ENCODE measurements at regions of chr2 and their contacts with region 1.

Region 1: DNA sequence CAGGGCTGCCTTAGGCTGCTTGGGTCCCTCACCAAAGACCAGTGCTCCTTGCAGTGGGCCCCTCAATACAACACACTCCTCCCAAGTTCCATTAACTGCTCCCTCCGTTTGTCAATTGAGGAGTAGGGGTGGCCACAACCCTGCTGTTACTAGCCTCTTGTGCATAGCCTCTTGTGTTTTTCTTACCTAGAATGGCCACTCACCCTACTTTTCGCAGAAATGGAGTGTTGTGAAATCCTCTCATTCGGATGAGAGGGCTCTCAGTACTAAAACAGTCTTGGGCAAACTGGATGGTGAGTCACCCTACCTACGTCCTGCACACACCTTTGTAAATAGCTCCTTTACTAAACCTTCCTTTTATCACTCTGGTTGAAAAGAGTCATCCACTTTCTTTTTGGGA is 253.9 kb downstream of the OSR1 start:
- DNase-seq: peak; percentile 92
- ATAC-seq: peak; percentile 79
- H3K4me3 ChIP-seq: peak overlapping the region; percentile 34; the same call in 1 of the 2 replicates
- H3K27ac ChIP-seq: peak overlapping the region; percentile 79
- H3K4me1 ChIP-seq: peaks cover 55% of the 10 kb centered on the region
- H3K27me3 ChIP-seq: no peaks in the 10 kb centered on the region
- CTCF ChIP-seq: no peak

Region 2: GRCh38 chr2:18883616-18884456 is 220.7 kb before region 1 on chr2:
- CTCF ChIA-PET with region 1: interaction called, 3 read pairs
- POLR2A ChIA-PET with region 1: no interaction called
- intact Hi-C with region 1: loop called (anchors 1 kb)
- DNase-seq: peak; percentile 69
- ATAC-seq: peak; percentile 60
- H3K4me3 ChIP-seq: no peak overlapping the region
- H3K27ac ChIP-seq: no peak overlapping the region
- H3K4me1 ChIP-seq: 0 out of 2 replicates have a peak, but pooled peaks cover 9% of the 10 kb centered on the region
- H3K27me3 ChIP-seq: no peaks in the 10 kb centered on the region
- CTCF ChIP-seq: peak; percentile 85

Region 3: DNA sequence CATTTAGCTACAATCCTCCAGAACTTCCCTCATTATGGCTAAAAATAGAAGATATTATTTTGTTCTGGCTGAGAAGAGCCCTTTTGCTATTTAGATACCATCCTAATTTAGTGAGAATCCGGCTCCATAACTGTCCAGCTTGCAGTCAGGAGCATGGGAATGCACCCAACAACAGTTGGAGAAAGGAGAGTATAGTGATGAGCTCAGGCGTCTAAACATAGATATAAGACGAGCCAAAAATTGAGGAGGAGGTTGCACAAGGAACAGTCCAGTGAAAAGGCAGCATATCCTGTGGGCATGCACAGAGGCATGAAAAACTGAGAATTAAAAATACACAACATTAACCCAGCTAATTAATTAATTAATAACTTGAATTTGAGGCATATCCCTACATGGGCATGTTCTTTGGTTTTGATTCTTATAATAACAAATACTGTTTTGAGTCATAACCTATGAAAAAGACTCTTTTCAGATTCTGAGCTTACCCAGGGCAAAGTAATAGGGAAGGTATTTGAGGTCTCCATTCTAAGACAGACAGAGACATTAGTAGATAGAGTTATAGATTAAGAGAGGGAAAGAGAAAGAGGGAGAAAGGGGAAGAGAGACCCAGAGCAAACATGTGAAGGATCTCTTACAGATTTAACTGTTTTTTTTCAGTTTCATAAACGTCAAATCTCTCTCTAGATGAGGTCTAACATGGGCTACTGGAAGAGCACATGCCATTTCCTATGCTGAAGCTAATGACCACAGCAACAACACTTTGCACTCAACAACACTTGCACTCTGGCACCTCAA is 57.3 kb before region 1 on chr2:
- CTCF ChIA-PET with region 1: no interaction called
- POLR2A ChIA-PET with region 1: no interaction called
- intact Hi-C with region 1: loop called (anchors 5 kb)
- DNase-seq: no peak
- ATAC-seq: no peak
- H3K4me3 ChIP-seq: no peak overlapping the region
- H3K27ac ChIP-seq: no peak overlapping the region
- H3K4me1 ChIP-seq: peaks cover 13% of the 10 kb centered on the region
- H3K27me3 ChIP-seq: no peaks in the 10 kb centered on the region
- CTCF ChIP-seq: no peak

Region 4: DNA sequence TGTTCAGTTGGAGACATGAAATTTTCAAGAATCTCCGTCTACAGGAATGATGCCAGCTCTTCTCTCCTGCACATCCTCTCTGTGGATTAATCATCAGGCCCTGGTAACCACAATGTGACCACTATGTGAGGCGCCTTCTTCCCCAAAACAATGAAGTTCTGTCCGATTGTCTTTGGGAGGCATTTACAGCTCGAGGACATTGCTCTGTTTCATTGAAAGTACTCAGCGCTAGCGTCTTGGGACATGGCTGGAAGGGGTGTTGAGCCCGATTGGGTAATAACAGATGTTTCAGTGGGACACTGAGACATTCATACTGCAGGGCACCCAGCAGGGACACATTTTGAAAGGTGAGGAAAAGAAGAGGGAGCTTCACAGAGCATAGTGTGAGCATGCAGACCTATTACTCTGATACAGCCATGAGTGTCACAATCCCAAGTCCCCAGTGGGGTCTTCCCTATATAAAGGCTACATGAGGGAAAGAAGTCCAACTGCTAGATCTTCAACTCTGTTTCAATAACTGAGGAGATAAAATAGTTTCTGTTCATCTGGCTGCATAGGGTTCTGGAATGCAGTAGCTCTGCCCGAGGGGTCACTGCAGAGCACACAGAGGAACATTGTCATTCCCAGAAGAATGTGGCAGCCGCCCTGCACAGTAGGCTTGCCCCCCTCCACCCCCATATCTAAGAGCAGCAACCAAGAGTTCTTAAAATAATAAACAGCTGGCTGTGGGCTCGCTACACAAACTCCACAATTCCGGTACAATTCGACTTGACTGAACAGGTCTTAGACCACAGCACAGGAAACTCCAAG is 16.6 kb after region 1 on chr2:
- CTCF ChIA-PET with region 1: no interaction called
- POLR2A ChIA-PET with region 1: interaction called, 4 read pairs
- intact Hi-C with region 1: loop called (anchors 2 kb)
- DNase-seq: peak; percentile 96
- ATAC-seq: peak; percentile 96
- H3K4me3 ChIP-seq: no peak overlapping the region
- H3K27ac ChIP-seq: no peak overlapping the region
- H3K4me1 ChIP-seq: peaks cover 19% of the 10 kb centered on the region
- H3K27me3 ChIP-seq: no peaks in the 10 kb centered on the region
- CTCF ChIP-seq: no peak

Region 5: GRCh38 chr2:19256121-19256601 is 151.7 kb after region 1 on chr2:
- CTCF ChIA-PET with region 1: no interaction called
- POLR2A ChIA-PET with region 1: no interaction called
- intact Hi-C with region 1: loop called (anchors 2 kb)
- DNase-seq: peak; percentile 99
- ATAC-seq: peak; percentile 97
- H3K4me3 ChIP-seq: no peak overlapping the region
- H3K27ac ChIP-seq: peak overlapping the region; percentile 88
- H3K4me1 ChIP-seq: peaks cover 25% of the 10 kb centered on the region
- H3K27me3 ChIP-seq: no peaks in the 10 kb centered on the region
- CTCF ChIP-seq: no peak

Region 6: DNA sequence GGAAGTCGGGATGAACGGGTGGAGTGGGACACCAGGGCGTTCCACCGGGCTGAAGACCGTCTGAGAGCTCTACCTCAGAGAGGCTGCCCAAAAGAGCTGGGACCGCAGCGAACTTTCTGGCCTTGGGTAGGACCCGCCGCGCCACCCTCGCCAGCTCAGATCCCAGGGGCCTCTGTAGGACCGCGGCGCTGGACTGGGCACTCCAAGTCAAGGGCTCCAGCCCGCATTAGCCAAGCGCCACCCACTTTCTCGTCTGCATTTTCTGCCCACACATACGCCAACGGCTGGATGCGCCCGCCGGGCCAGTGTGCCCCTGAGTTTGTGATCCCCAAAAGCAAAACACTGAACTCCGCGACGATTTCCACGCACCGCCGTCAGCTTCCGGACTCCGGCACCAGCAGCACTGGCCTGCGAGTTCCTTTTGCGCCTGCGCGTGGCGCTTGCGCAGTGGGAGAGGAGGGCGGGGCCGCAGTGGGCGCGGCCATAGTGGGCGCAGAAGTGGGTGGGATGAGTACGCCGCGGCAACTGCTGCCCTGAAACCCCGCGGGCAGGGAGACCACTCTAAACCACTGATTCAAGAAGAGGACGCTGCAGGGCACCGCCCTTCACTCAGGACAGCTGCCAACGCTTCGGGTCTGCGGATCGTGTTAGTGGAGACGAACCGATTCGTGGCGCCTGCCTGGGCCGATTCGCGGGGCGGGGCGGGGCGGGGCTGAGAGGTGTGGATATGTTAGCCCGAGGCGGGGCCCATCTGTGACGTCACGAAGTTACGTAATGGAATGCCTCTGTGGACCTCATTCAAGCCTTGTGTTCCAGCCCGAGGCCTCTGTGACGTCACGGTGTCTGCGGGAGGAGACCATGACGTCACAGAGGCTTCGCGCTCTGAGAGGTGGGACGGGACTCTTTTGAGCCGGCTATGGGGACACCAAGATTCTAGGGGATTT is 243.4 kb after region 1 on chr2:
- CTCF ChIA-PET with region 1: no interaction called
- POLR2A ChIA-PET with region 1: no interaction called
- intact Hi-C with region 1: loop called (anchors 2 kb)
- DNase-seq: peak; percentile 95
- ATAC-seq: peak; percentile 87
- H3K4me3 ChIP-seq: peak overlapping the region; percentile 73
- H3K27ac ChIP-seq: peak overlapping the region; percentile 51
- H3K4me1 ChIP-seq: peaks cover 7% of the 10 kb centered on the region
- H3K27me3 ChIP-seq: no peaks in the 10 kb centered on the region
- CTCF ChIP-seq: no peak